Activated T-helper 2 cell treated with anti-CD3 and anti-CD28 coated beads, Interferon-gamma antibody, Interleukin-2, Interleukin-4, amounts not matched to agents 10 μg/mL and 5 μg/mL and 100 μg/mL, durations not matched to agents 14 hours and 24 hours and 36 hours (primary cell): ENCODE measurements at regions of chr18 and their contacts with region 1.

Region 1: DNA sequence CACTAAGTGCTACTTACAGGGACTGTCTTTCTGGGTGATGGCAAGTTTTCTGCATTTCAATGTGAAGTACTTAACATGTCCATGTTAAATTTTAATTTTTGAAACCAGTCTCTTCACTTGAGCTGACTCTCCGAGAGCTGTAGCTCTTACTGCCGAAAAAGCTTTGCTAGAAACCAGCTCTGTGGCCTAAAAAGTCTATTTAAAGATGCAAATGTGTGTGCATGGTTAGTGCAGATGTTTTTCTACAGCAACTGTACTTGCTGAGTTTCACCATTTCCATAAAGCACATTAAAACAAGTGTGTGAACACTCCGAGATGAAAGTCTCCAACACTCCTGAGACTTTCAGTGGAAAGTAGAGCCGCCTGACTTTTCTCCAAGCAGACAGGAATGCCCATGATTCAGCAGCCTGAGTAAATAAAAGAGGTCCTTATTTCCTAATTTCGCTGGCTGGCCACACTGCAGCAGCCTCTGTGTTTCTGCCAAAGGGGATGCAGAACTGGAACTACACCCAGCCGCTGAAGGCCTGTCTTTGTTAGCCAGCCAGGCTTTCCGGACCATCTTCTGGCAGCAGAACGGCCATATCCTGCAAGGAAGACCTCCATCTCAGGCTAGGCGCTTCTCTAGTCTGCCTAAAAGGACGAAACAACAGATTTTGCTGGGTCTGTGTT is 121.2 kb downstream of the ZNF521 start:
- DNase-seq: no peak
- H3K4me3 Mint-ChIP-seq: no peak overlapping the region
- H3K27ac Mint-ChIP-seq: no peak overlapping the region
- H3K4me1 Mint-ChIP-seq: no peaks in the 10 kb centered on the region
- H3K27me3 Mint-ChIP-seq: peaks cover 1% of the 10 kb centered on the region

Region 2: GRCh38 chr18:25262920-25263319 is 32.1 kb after region 1 on chr18:
- intact Hi-C with region 1: no loop called
- DNase-seq: no peak
- H3K4me3 Mint-ChIP-seq: no peak overlapping the region
- H3K27ac Mint-ChIP-seq: no peak overlapping the region
- H3K4me1 Mint-ChIP-seq: no peaks in the 10 kb centered on the region
- H3K27me3 Mint-ChIP-seq: no peaks in the 10 kb centered on the region

Region 3: GRCh38 chr18:25326361-25326952 is 95.7 kb after region 1 on chr18:
- intact Hi-C with region 1: no loop called
- DNase-seq: no peak
- H3K4me3 Mint-ChIP-seq: no peak overlapping the region
- H3K27ac Mint-ChIP-seq: no peak overlapping the region
- H3K4me1 Mint-ChIP-seq: no peaks in the 10 kb centered on the region
- H3K27me3 Mint-ChIP-seq: peaks cover 2% of the 10 kb centered on the region

Region 4: GRCh38 chr18:25351777-25352628 is 121.2 kb after region 1 on chr18 and contains the start of gene ZNF521:
- intact Hi-C with region 1: loop called (anchors 5 kb)
- DNase-seq: peak; percentile 24
- H3K4me3 Mint-ChIP-seq: peak within 1 kb of the TSS; percentile 71
- H3K27ac Mint-ChIP-seq: no peak within 1 kb of the TSS
- H3K4me1 Mint-ChIP-seq: peaks cover 11% of the 10 kb centered on the region
- H3K27me3 Mint-ChIP-seq: peaks cover 63% of the 10 kb centered on the region
- total RNA-seq, gene ZNF521: not detected in 2 replicates